AG04450 (cell line): ENCODE measurements at regions of chr3 and their contacts with region 1.

Region 1: DNA sequence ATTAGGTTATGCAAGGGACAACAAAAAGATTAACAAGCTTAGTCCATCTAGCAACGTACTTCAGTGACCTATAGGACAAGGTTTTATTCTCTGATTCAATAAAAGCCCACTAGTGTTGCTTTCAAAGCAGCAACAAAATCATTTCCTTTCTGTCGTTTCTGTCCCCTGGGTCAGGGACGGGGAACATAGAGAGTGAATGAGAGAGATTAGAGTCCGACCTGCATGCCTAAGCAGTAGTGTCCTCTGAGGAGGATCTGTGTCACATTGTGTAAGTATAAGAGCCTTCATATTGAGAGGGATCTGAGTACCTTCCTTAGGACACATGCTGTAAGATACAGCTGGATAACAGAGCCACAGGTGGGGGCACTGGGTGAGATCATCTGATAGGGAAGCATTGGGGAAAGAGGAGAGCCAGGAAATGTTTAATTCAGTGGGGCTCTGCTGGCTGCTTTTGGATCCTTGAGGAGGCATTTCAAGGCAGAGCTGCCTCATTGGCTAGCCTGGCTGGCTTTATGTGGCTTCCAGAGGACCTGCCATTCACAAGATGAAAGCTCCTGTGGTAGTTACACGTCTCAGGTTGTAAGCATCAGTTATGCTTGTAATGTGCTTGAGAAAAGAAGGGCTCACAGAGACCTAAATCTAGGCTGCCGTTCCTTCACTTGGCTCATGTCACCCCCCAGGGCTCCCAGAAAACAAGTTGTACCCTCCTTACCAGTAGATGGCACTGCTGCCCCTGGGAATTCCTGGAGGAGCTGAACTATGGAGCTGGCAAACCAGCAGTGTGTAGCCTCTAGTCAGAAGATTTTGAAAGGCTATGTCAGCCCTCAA is 2.7 kb downstream of the TMEM108 start:
- DNase-seq: peak; percentile 59
- H3K4me3 ChIP-seq: no peak overlapping the region
- H3K27ac ChIP-seq: no peak overlapping the region
- H3K27me3 ChIP-seq: peaks cover 14% of the 10 kb centered on the region
- CTCF ChIP-seq: peak; percentile 89

Region 2: DNA sequence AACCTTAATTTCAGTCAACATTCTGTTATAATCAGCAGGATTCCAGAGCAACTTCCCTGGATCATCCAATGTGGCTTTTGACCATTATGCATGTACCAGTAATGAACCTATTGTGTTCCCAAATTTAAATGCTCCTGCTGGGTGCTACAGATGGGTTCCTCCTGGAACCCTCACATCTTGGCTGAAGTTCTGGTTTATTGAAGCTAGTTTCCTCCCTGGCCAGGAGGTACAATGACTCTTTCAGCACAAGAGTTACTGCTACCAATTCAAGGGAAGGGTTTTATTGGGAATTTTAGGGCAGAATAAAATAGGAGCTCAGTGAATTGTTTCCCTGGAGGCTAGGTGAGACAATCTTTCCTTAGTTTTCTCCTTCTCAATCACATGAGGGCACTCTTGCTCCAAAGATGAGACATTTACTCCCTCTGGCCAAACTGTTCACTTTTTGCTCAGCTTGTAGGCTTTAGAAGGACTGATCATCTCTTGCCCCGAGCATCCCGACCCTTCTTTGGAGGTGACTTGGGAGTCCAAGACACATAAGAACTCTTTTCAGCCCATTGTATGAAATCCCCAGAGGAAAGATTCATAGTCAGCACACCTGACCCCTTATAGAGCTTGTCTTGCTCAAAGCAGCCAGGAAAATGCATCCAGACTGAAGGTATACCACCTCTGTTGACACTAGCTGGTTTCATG is 309.9 kb before region 1 on chr3:
- CTCF ChIA-PET with region 1: interaction called, 41 read pairs
- POLR2A ChIA-PET with region 1: no interaction called
- DNase-seq: no peak
- H3K4me3 ChIP-seq: no peak overlapping the region
- H3K27ac ChIP-seq: no peak overlapping the region
- H3K27me3 ChIP-seq: no peaks in the 10 kb centered on the region
- CTCF ChIP-seq: peak; percentile 45

Region 3: DNA sequence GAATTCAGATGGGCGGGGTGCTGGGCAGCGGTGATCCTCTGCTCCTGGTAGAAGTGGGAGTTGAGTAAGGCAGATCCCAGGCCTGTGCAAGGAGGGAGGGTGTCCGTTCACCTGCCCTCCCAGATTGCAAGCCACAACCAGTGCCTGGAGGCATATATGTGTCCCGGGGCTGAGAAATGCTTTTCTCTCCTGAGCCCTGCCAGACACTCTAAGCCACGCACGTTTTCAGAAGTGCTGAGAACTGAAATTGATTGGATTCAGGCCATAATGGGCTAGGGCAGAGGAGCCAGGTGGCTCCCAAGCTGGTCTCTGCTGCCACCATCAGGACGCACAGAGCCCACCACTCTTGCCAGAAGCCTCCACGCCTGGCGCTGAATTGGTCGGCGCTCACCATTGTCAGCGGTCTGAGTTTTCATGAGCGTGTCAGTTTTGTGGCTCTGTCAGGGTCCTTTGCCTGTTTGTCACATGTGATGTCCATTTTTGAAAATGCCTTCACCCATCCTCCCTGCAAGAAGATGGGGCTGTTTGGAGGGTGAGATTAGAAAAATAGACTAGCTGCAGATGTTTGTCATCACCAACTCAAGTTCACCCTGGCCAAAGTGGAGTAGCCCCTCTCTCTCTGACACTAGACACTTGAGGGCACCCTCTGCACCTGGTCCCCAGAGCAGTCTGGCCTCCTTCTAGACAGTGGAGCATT is 343.6 kb after region 1 on chr3:
- CTCF ChIA-PET with region 1: interaction called, 112 read pairs
- POLR2A ChIA-PET with region 1: no interaction called
- DNase-seq: peak; percentile 26
- H3K4me3 ChIP-seq: no peak overlapping the region
- H3K27ac ChIP-seq: no peak overlapping the region
- H3K27me3 ChIP-seq: no peaks in the 10 kb centered on the region
- CTCF ChIP-seq: peak; percentile 89

Region 4: GRCh38 chr3:133413161-133414020 is 372.5 kb after region 1 on chr3:
- CTCF ChIA-PET with region 1: interaction called, 38 read pairs
- POLR2A ChIA-PET with region 1: no interaction called
- DNase-seq: no peak
- H3K4me3 ChIP-seq: peak overlapping the region; percentile 59
- H3K27ac ChIP-seq: peak overlapping the region; percentile 96
- H3K27me3 ChIP-seq: no peaks in the 10 kb centered on the region
- CTCF ChIP-seq: no peak

Region 5: DNA sequence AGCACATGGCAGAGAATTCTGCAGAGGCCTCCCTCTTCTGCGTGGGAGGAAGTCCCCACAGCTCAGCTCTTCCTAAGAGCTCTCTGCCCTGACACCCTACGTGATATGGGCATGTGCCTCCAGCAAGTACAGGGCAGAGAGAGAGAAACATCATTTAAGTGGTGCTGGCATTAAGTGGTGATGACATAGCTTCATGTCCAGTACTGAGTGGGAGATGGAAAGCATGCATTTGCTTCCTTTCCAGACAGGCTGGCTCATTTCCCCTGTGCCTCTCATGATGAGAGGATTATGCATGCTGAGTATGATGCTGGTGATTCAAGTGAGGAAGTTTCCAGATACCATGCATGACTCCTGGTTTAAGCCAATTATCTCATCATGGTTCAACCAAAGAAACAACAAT is 385.8 kb after region 1 on chr3:
- CTCF ChIA-PET with region 1: interaction called, 41 read pairs
- POLR2A ChIA-PET with region 1: no interaction called
- DNase-seq: no peak
- H3K4me3 ChIP-seq: no peak overlapping the region
- H3K27ac ChIP-seq: no peak overlapping the region
- H3K27me3 ChIP-seq: no peaks in the 10 kb centered on the region
- CTCF ChIP-seq: no peak